ENCODE measurements at regions of chr6 and their contacts with region 1.

Region 1: DNA sequence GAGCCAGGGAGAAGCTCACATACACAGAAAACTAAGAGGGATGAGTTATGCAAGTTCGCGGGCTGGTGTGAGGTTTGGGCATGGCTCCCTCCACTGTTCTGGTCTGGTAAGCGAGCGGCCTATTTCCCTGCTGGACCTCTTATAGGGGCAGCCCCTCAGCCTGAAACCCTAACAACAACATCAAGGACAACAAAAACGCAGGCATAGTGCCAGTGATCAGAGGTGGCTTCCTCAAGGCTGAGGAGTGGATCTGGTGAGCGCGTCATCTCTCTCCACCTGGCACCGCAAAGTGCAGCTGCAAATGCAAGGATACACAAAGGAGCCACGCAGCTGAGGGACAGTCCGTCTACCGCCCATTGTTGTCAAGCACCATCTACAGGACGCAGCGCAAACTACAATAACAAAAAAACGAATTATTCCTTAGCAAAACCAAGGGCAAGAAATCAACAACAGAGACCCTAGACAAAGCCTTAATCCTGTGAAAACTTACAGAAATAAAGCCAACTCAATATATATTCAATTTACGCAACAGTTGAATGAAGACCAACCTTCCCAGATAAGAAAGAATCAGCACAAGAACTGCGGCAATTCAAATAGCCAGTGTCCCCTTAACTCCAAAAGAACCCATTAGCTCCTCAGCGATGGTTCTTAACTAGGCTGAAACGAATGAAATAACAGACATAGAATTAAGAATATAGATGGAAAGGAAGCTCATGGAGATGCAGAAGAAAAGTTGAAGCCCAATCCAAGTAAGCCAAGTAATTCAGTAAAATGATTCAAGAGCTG is 9.2 kb upstream of the DEFB110 start:
- DNase-seq: peak; percentile 38 to 72
- H3K4me3 ChIP-seq: peak overlapping the region in 3 of 4 experiments; percentile 17 to 32 (median 26); a peak in 2 of 8 replicates
- H3K27ac ChIP-seq: no peak overlapping the region
- H3K4me1 ChIP-seq: no peaks in the 10 kb centered on the region; a peak in 1 of 7 replicates
- H3K27me3 ChIP-seq: no peaks in the 10 kb centered on the region
- CTCF ChIP-seq: peak; percentile 50 to 77 (median 71); a peak in 3 of 4 replicates
- EP300 ChIP-seq: no peak
- POLR2A ChIP-seq: peak in 1 of 2 experiments; percentile 36; a peak in 1 of 3 replicates
- RAD21 ChIP-seq: peak; percentile 55 to 59

Region 2: DNA sequence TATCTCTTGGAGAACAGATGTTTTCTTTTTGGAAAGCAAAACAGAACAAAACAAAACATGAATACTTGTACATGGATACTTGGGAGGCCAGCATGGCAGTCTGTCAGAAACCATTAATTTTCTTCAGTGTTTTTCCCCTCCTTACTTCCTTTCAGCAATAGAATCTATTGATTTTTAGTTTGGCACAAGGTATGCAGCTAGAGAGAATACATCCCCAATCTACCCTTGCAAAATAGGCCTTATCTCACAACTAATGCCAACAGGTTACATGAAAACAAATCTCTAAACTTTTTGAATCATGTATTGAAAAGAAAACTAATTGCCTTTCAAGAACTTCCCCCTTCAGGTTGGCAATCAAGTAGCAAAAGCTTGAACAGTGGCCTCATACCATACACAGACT is 246.7 kb before region 1 on chr6:
- CTCF ChIA-PET with region 1: no interaction called
- POLR2A ChIA-PET with region 1: no interaction called
- DNase-seq: no peak
- H3K4me3 ChIP-seq: no peak overlapping the region
- H3K27ac ChIP-seq: no peak overlapping the region
- H3K4me1 ChIP-seq: no peaks in the 10 kb centered on the region; a peak in 1 of 7 replicates
- H3K27me3 ChIP-seq: no peaks in the 10 kb centered on the region
- CTCF ChIP-seq: no peak
- EP300 ChIP-seq: no peak
- POLR2A ChIP-seq: no peak
- RAD21 ChIP-seq: no peak

Region 3: GRCh38 chr6:49892280-49892679 is 138.7 kb before region 1 on chr6:
- CTCF ChIA-PET with region 1: interaction called, 15 read pairs
- POLR2A ChIA-PET with region 1: no interaction called
- DNase-seq: no peak
- H3K4me3 ChIP-seq: no peak overlapping the region
- H3K27ac ChIP-seq: no peak overlapping the region
- H3K4me1 ChIP-seq: peaks cover 0 to 22% (median 3%) of the 10 kb centered on the region in 4 experiments; a peak in 4 of 7 replicates
- H3K27me3 ChIP-seq: peaks cover 15 to 41% (median 32%) of the 10 kb centered on the region in 4 experiments
- CTCF ChIP-seq: no peak
- EP300 ChIP-seq: no peak
- POLR2A ChIP-seq: no peak
- RAD21 ChIP-seq: no peak

Region 4: GRCh38 chr6:49923826-49924225 is 107.1 kb before region 1 on chr6:
- CTCF ChIA-PET with region 1: interaction called, 21 read pairs
- POLR2A ChIA-PET with region 1: no interaction called
- DNase-seq: no peak
- H3K4me3 ChIP-seq: no peak overlapping the region
- H3K27ac ChIP-seq: no peak overlapping the region
- H3K4me1 ChIP-seq: peaks cover 0 to 5% (median 1%) of the 10 kb centered on the region in 4 experiments; a peak in 2 of 7 replicates
- H3K27me3 ChIP-seq: no peaks in the 10 kb centered on the region
- CTCF ChIP-seq: peak; percentile 1 to 63 (median 54)
- EP300 ChIP-seq: no peak
- POLR2A ChIP-seq: no peak
- RAD21 ChIP-seq: peak; percentile 74 to 80

Region 5: GRCh38 chr6:50047026-50047425 is 16.1 kb after region 1 on chr6:
- CTCF ChIA-PET with region 1: interaction called, 16 read pairs
- POLR2A ChIA-PET with region 1: no interaction called
- DNase-seq: no peak
- H3K4me3 ChIP-seq: no peak overlapping the region
- H3K27ac ChIP-seq: no peak overlapping the region
- H3K4me1 ChIP-seq: no peaks in the 10 kb centered on the region
- H3K27me3 ChIP-seq: no peaks in the 10 kb centered on the region
- CTCF ChIP-seq: no peak
- EP300 ChIP-seq: no peak
- POLR2A ChIP-seq: no peak
- RAD21 ChIP-seq: no peak